ENCODE measurements at regions of chr12 and their contacts with region 1.

Region 1: GRCh38 chr12:52069327-52070184 is at the start of gene ATG101:
- DNase-seq: peak; percentile 91 to 94 (median 93)
- ATAC-seq: peak; percentile 97 to 99 (median 98)
- H3K4me3 ChIP-seq: peak within 1 kb of the TSS; percentile 74 to 97 (median 86)
- H3K27ac ChIP-seq: peak within 1 kb of the TSS; percentile 82 to 97 (median 93)
- H3K4me1 ChIP-seq: peaks cover 9 to 44% (median 29%) of the 10 kb centered on the region in 12 donors
- H3K27me3 ChIP-seq: no peaks in the 10 kb centered on the region
- CTCF ChIP-seq: peak; percentile 51 to 91 (median 74)
- POLR2A ChIP-seq: peak in 1 of 2 donors; percentile 65
- total RNA-seq, gene ATG101: 18.9 to 46.7 (median 24.1) TPM

Region 2: DNA sequence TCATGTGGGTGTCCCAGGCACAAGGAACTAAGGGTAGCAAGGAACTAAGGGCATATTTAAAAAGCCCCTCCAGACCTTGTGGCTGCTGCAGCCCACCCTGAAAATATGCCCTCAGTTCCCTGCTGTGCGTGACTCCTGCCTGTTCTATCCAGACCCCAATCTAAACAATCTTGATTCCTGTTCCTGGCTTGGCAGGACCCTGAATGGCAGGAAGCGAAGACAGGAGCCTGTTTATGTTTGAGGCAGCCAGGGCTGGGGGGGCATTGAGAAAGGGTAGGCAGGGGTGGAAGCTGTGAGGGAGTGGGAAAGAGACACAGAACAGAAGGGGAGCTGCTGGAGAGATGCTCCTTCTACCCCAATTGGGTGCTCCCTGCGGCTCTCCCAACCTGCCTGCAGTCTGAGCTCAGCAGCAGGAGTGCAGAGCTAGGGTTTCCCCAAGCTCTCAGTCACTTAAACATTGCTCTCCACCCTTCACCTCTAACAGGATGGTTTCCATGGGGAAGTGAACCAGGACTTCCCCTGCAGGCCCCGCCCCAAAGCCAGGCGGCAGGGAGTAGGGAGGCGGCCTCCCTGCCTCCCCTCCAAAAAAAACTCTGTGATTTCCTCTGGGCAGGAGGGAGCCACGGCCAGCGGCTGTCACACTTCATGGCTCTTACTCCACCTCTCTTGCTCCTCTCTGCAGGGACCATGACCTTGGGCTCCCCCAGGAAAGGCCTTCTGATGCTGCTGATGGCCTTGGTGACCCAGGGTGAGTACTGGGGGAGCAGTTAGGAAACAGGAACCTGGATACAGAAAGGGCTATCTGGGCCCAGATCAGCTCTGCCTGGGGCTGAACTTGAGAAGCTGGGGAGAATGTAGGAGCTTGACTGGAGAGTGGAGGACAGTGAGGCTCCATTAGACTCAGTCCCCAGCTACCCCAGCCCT is 157.5 kb before region 1 on chr12:
- intact Hi-C with region 1: no loop called
- DNase-seq: peak in 4 of 5 donors; percentile 63 to 75 (median 68)
- ATAC-seq: peak; percentile 54 to 84 (median 64)
- H3K4me3 ChIP-seq: peak overlapping the region in 9 of 12 donors; percentile 25 to 65 (median 38)
- H3K27ac ChIP-seq: peak overlapping the region; percentile 25 to 95 (median 78)
- H3K4me1 ChIP-seq: peaks cover 6 to 74% (median 61%) of the 10 kb centered on the region in 12 donors
- H3K27me3 ChIP-seq: peaks cover 0 to 12% (median 2%) of the 10 kb centered on the region in 9 donors
- CTCF ChIP-seq: no peak
- POLR2A ChIP-seq: no peak

Region 3: DNA sequence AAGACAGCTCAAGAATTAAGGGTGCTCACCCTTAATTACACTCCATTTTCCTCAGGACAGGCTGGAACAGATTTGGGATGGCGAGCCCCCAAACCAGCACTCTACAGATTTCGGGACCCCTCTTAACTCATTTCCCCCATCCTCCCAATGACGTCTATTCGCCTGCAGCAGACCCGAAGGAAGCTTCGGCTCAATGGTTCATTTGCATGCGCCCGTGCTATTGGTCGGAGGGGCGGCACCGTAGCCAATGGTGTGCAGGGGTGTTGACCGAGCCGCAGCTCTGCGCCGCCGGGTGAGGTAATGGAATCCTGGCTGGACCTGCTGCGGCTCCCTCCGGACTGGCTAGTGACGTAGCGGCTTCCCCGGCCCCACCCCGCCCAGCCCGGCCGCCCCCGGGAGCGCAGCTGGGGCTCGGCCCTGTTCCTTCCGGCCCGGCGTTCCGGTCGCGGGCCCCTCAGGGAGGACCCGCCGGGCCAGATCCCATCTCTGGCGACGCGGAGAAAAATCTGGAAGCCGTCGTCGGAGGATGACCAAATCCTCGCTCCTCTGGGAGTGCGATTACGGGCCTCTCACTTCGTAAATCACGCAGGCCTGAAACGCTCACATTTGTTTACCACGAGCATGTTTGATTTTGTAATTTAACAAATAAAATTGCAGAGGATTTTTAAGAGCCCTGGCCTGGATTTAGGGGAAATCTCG is 36.6 kb before region 1 on chr12:
- intact Hi-C with region 1: loop called in 2 of 10 experiments (anchors 2 kb)
- DNase-seq: peak; percentile 98 to 100 (median 99)
- ATAC-seq: peak; percentile 92 to 95 (median 94)
- H3K4me3 ChIP-seq: peak overlapping the region in 10 of 12 donors; percentile 20 to 52 (median 43)
- H3K27ac ChIP-seq: peak overlapping the region; percentile 83 to 98 (median 96)
- H3K4me1 ChIP-seq: peaks cover 14 to 63% (median 38%) of the 10 kb centered on the region in 12 donors
- H3K27me3 ChIP-seq: no peaks in the 10 kb centered on the region
- CTCF ChIP-seq: no peak
- POLR2A ChIP-seq: peak; percentile 85 to 91